Natural killer cell (primary cell): ENCODE measurements at regions of chr14 and their contacts with region 1.

Region 1: DNA sequence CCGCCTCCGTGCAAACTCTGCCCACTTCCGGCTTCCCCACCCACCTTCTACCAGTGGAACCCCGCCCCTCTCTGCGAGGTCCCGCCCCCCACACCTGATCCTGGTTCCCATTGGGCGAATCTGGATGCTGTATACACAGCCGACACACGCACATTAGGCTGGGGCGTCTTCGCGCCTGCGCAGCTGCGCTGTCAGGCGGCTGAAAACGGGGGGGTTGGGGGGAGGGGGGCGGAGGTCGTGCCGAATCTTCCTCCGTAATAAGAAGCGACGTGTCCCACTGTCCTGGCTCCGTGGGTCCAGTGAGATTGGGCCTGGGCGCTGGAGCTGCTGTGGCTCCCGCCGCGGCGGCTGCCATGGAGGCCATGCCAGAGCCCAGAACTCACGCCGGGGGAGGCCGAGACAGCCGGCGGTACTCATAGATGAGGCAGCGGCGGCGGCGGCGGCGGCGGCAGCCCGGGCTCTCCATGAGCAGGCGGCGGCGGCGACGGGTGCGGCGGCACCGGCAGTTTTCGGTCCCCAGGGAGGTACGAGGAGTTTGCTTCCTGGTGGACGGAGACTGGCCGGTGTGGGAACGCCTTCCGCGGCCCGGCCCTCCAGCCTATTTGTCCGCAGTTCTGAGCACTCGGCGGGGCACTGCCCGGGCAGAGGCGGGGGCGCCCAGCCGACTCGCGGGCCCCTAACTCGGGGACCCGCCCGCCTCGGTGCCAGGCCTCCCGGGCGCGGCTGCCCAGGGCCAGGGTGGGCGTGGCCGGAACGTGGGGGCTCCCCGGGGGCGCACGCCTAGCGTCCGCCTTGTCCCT is 64.5 kb downstream of the KLHL28 start:
- DNase-seq: peak; percentile 84 to 99
- ATAC-seq: peak; percentile 97 to 100 (median 97)
- H3K4me3 ChIP-seq: peak overlapping the region; percentile 75
- H3K4me3 Mint-ChIP-seq: peak overlapping the region; percentile 86
- H3K27ac ChIP-seq: peak overlapping the region; percentile 92
- H3K27ac Mint-ChIP-seq: peak overlapping the region; percentile 88 to 97
- H3K4me1 ChIP-seq: peaks cover 8% of the 10 kb centered on the region
- H3K4me1 Mint-ChIP-seq: peaks cover 11 to 14% of the 10 kb centered on the region in 2 donors
- H3K27me3 ChIP-seq: no peaks in the 10 kb centered on the region
- H3K27me3 Mint-ChIP-seq: no peaks in the 10 kb centered on the region
- CTCF ChIP-seq: no peak

Region 2: DNA sequence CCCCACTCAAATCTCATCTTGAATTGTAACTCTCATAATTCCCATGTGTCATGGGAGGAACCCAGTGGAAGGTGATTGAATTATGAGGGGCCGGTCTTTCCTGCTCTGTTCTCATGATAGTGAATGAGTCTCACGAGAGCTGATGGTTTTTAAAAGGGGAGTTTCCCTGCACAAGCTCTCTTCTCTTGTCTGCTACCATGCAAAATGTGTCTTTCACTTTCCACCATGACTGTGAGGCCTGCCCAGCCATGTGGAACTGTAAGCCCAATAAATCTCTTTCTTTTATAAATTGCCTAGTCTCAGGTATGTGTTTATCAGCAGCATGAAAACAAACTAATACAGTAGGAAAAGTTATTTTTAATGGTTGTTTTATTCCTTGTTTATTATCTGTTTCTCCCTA is 536.2 kb before region 1 on chr14:
- intact Hi-C with region 1: no loop called
- DNase-seq: no peak
- ATAC-seq: no peak
- H3K4me3 ChIP-seq: no peak overlapping the region
- H3K4me3 Mint-ChIP-seq: no peak overlapping the region
- H3K27ac ChIP-seq: no peak overlapping the region
- H3K27ac Mint-ChIP-seq: no peak overlapping the region
- H3K4me1 ChIP-seq: no peaks in the 10 kb centered on the region
- H3K4me1 Mint-ChIP-seq: no peaks in the 10 kb centered on the region
- H3K27me3 ChIP-seq: no peaks in the 10 kb centered on the region
- H3K27me3 Mint-ChIP-seq: no peaks in the 10 kb centered on the region
- CTCF ChIP-seq: no peak

Region 3: GRCh38 chr14:44961604-44962333 is 64.5 kb after region 1 on chr14 and contains the starts of genes KLHL28 and TOGARAM1:
- intact Hi-C with region 1: loop called (anchors 1 kb)
- DNase-seq: peak; percentile 93 to 99
- ATAC-seq: peak; percentile 89 to 98 (median 93)
- H3K4me3 ChIP-seq: peak within 1 kb of the TSS; percentile 97
- H3K4me3 Mint-ChIP-seq: no peak within 1 kb of the TSS
- H3K27ac ChIP-seq: peak within 1 kb of the TSS; percentile 93
- H3K27ac Mint-ChIP-seq: no peak within 1 kb of the TSS
- H3K4me1 ChIP-seq: peaks cover 23% of the 10 kb centered on the region
- H3K4me1 Mint-ChIP-seq: peaks cover 41 to 43% of the 10 kb centered on the region in 2 donors
- H3K27me3 ChIP-seq: no peaks in the 10 kb centered on the region
- H3K27me3 Mint-ChIP-seq: no peaks in the 10 kb centered on the region
- CTCF ChIP-seq: no peak
- total RNA-seq, gene KLHL28: 47.6 to 59.7 (median 56.0) TPM
- total RNA-seq, gene TOGARAM1: 17.4 to 21.4 (median 19.6) TPM

Region 4: DNA sequence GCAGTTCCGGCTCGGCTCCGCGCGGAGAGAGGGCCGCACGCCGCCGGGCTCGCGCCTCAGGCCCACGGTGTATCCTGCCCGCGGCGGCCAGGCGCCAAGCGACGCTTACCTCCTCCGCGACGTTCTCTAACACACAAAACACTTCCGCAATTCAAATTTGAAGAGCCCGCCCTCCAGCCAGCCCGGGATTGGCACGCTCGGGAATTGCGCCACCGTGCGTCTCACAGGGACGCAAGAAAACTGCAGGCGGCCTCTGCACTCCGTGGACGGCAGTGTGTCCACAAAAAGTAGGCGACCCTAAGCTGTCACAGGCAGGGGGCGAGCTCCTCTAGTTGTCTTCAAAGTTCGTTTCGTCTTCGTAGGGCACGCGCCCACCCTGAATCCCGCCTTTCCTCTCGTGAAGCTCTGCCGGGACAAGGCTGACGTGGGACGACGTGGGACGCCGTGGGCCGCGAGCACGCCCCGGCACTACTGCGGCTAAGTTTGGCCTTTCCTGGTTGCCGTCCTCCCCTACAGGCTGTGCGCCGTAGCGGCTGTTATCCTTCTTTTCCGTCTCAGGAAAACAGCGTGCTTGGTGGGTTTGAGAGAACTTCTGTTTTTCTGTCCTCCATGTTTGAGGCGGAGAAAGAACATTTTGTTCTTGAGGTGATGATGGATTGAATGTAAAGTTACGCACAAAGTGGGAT is 356.0 kb after region 1 on chr14 and contains the start of gene MIS18BP1:
- intact Hi-C with region 1: loop called (anchors 5 kb)
- DNase-seq: peak; percentile 87 to 97
- ATAC-seq: peak; percentile 88 to 95 (median 90)
- H3K4me3 ChIP-seq: peak within 1 kb of the TSS; percentile 92
- H3K4me3 Mint-ChIP-seq: peak within 1 kb of the TSS; percentile 93
- H3K27ac ChIP-seq: peak within 1 kb of the TSS; percentile 91
- H3K27ac Mint-ChIP-seq: peak within 1 kb of the TSS; percentile 92 to 94
- H3K4me1 ChIP-seq: peaks cover 27% of the 10 kb centered on the region
- H3K4me1 Mint-ChIP-seq: peaks cover 18 to 20% of the 10 kb centered on the region in 2 donors
- H3K27me3 ChIP-seq: no peaks in the 10 kb centered on the region
- H3K27me3 Mint-ChIP-seq: no peaks in the 10 kb centered on the region
- CTCF ChIP-seq: peak; percentile 86
- total RNA-seq, gene MIS18BP1: 60.3 to 70.2 (median 66.3) TPM